ENCODE measurements at regions of chrX and their contacts with region 1.

Region 1: DNA sequence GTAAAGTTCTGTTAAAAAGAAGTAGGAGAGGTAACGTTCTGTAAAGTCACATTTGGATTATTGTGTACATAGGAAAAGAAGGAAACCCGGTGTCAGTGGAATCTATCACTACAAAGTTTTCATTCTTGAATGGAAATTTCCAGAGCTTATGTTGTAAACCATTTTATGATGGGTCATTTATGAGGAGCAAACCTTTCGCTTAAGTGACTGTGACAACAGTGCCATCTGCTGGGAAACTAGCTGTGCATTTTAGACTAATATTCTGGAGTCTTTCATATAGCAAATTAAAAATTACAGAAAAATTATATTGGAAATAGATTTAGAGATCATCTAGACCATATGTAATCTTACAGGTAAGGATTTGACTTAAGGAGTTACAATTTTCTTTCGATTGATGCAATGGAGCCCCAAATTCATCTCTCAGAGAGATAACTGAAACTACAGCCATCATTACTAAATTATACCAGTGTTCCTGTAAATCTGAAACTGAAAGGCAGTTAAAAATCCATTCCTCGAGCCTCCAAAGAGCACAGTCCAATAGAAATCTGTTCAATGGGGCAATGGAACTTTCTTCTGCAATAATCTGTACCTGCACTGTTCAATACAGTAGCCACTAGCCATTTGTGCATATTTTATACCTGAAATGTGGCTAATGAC is 26.9 kb downstream of the ASB9 start:
- DNase-seq: peak; percentile 61
- H3K4me3 ChIP-seq: no peak overlapping the region
- H3K27ac ChIP-seq: no peak overlapping the region
- H3K4me1 ChIP-seq: no peaks in the 10 kb centered on the region
- H3K27me3 ChIP-seq: no peaks in the 10 kb centered on the region
- CTCF ChIP-seq: peak; percentile 69

Region 2: GRCh38 chrX:14039344-14039743 is 1203.7 kb before region 1 on chrX:
- CTCF ChIA-PET with region 1: no interaction called
- POLR2A ChIA-PET with region 1: no interaction called
- intact Hi-C with region 1: loop called (anchors 2 kb)
- DNase-seq: peak; percentile 71
- H3K4me3 ChIP-seq: no peak overlapping the region
- H3K27ac ChIP-seq: no peak overlapping the region
- H3K4me1 ChIP-seq: no peaks in the 10 kb centered on the region
- H3K27me3 ChIP-seq: no peaks in the 10 kb centered on the region
- CTCF ChIP-seq: peak; percentile 78

Region 3: DNA sequence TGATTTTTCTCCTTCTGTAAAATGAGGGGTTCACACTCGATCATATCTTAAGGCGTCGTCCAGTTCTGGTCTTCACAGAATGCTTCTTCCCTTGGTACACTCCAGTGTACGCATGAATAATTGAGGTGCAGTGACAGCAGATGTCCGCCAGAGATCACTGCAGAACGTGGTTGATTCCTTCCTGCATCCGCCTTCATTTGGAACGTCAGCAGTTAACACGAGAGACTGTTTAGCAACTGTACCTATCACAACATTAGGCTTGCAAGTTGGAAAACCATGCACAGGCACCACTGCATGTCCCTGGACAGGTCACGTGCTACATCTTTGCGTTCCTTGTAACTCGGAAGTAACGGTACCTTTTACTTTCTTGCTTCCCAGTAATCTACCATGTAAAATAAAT is 1147.3 kb before region 1 on chrX:
- CTCF ChIA-PET with region 1: no interaction called
- POLR2A ChIA-PET with region 1: no interaction called
- intact Hi-C with region 1: loop called (anchors 5 kb)
- DNase-seq: peak; percentile 73
- H3K4me3 ChIP-seq: no peak overlapping the region
- H3K27ac ChIP-seq: no peak overlapping the region
- H3K4me1 ChIP-seq: no peaks in the 10 kb centered on the region
- H3K27me3 ChIP-seq: peaks cover 11% of the 10 kb centered on the region
- CTCF ChIP-seq: peak; percentile 86

Region 4: GRCh38 chrX:16185725-16186136 is 942.7 kb after region 1 on chrX:
- CTCF ChIA-PET with region 1: no interaction called
- POLR2A ChIA-PET with region 1: no interaction called
- intact Hi-C with region 1: no loop called
- DNase-seq: peak; percentile 28
- H3K4me3 ChIP-seq: no peak overlapping the region
- H3K27ac ChIP-seq: no peak overlapping the region
- H3K4me1 ChIP-seq: no peaks in the 10 kb centered on the region
- H3K27me3 ChIP-seq: no peaks in the 10 kb centered on the region
- CTCF ChIP-seq: no peak